CD8-positive, alpha-beta T cell (primary cell): ENCODE measurements at regions of chr4 and their contacts with region 1.

Region 1: DNA sequence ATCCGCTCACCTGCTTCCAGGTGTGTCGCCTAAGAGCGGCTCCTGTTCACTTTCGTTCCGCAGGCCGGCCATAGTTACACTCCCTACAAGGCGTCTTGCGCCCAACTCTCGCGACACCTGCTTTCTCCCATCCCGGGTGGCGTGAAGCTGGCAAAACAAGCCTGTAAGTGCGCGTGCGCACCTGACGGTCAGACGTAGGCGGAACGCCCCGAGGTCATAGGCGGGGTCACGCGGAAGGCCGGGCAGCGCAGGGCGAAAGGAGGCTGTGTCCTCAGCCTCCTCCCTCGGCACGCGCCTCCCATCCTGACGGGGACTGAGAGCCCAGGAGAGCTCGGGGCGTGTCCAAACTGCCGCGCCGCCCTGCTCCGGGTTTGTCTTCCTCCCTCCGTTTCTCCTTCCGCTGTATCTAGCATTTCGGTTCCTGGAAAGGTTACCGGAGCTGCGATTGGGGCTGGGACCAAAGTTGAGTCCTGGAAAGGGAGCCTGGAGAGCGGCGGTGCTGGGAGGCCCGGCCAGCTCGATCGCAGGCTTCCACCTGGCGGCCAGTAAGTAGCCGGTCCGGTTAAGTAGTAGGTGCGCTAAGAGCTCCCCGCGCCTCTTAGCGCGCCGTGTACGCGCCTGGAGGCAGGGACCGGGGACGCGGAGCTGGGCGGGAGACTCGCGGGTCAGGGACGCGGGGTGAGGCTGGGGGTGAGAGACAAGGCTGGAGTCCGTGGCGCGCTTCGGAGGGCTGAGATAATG is at the starts of genes ABHD18 and MFSD8:
- DNase-seq: peak; percentile 96 to 100 (median 99)
- ATAC-seq: peak; percentile 85
- H3K4me3 ChIP-seq: peak within 1 kb of the TSS; percentile 92 to 98
- H3K4me3 Mint-ChIP-seq: peak within 1 kb of the TSS; percentile 94
- H3K27ac ChIP-seq: peak within 1 kb of the TSS; percentile 91 to 96
- H3K27ac Mint-ChIP-seq: peak within 1 kb of the TSS; percentile 96
- H3K4me1 ChIP-seq: peaks cover 27% of the 10 kb centered on the region
- H3K4me1 Mint-ChIP-seq: peaks cover 49% of the 10 kb centered on the region
- H3K27me3 ChIP-seq: no peaks in the 10 kb centered on the region
- H3K27me3 Mint-ChIP-seq: no peaks in the 10 kb centered on the region
- CTCF ChIP-seq: no peak
- total RNA-seq, gene ABHD18: 13.3 to 13.5 TPM
- total RNA-seq, gene MFSD8: 26.1 to 27.1 TPM

Region 2: GRCh38 chr4:127781300-127782023 is 183.8 kb before region 1 on chr4:
- CTCF ChIA-PET with region 1: no interaction called
- POLR2A ChIA-PET with region 1: no interaction called
- intact Hi-C with region 1: loop called in 1 of 2 experiments (anchors 2 kb)
- DNase-seq: peak in 1 of 9 experiments; percentile 13
- ATAC-seq: peak; percentile 17
- H3K4me3 ChIP-seq: peak overlapping the region; percentile 42 to 66
- H3K4me3 Mint-ChIP-seq: peak overlapping the region; percentile 92
- H3K27ac ChIP-seq: no peak overlapping the region
- H3K27ac Mint-ChIP-seq: no peak overlapping the region
- H3K4me1 ChIP-seq: peaks cover 14% of the 10 kb centered on the region
- H3K4me1 Mint-ChIP-seq: peaks cover 15% of the 10 kb centered on the region
- H3K27me3 ChIP-seq: peaks cover 17 to 25% of the 10 kb centered on the region in 2 experiments
- H3K27me3 Mint-ChIP-seq: peaks cover 64% of the 10 kb centered on the region
- CTCF ChIP-seq: no peak

Region 3: GRCh38 chr4:127880764-127881562 is 84.3 kb before region 1 on chr4 and contains the start of gene PLK4:
- CTCF ChIA-PET with region 1: interaction called, 4 read pairs
- POLR2A ChIA-PET with region 1: interaction called, 19 read pairs
- intact Hi-C with region 1: loop called (anchors 1 to 2 kb)
- DNase-seq: peak; percentile 87 to 97 (median 94)
- ATAC-seq: peak; percentile 92
- H3K4me3 ChIP-seq: peak within 1 kb of the TSS; percentile 75 to 84
- H3K4me3 Mint-ChIP-seq: peak within 1 kb of the TSS; percentile 98
- H3K27ac ChIP-seq: peak within 1 kb of the TSS; percentile 71 to 87
- H3K27ac Mint-ChIP-seq: peak within 1 kb of the TSS; percentile 97
- H3K4me1 ChIP-seq: peaks cover 19% of the 10 kb centered on the region
- H3K4me1 Mint-ChIP-seq: peaks cover 23% of the 10 kb centered on the region
- H3K27me3 ChIP-seq: no peaks in the 10 kb centered on the region
- H3K27me3 Mint-ChIP-seq: no peaks in the 10 kb centered on the region
- CTCF ChIP-seq: no peak
- total RNA-seq, gene PLK4: 4.5 to 5.9 TPM

Region 4: DNA sequence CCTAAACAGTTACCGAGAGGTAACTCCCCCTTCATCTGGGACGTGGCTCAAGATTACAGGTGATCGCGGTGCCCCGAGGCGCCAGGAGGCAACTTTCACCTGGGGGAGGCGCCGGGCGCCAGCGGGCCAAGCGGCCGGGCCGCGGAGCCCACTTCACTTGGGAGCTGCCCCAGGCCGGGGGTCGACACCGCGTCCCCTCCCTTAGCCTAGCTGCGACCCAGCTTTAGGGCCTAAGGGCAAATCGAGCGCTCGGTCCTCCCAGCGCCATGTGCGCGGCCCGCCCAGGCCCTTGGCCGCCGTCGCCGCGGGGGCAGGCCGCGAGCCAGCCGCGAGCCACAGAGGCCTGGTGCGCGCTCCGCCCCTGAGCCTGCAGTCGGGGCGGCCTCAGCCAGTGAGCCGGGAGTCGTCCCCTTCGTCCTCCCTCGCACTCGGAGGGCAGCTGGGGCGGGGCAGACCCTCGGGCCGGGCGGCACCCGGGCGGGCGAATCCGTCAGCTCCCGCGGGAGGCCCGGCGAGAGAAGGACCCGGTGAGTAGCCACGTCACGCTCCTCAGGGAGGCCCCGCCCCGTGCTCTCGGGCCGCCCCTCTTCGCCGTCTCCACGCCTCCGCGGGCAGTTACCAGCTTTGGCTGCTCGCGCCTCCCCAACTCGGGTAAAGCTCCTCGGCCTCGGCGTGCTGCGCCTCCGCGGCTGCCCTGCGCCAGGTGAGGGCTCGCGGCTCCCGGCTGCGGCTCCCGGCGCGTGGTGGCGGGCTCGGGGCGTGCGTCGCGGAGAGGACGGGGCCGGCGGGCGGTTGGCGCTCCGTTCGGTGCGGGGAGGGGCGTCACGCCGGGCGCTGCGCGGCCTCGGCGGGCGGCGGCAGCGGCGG is 95.7 kb after region 1 on chr4 and contains the start of gene LARP1B:
- CTCF ChIA-PET with region 1: interaction called, 11 read pairs
- POLR2A ChIA-PET with region 1: interaction called, 46 read pairs
- intact Hi-C with region 1: loop called (anchors 1 to 2 kb)
- DNase-seq: peak; percentile 87 to 95 (median 91)
- ATAC-seq: peak; percentile 90
- H3K4me3 ChIP-seq: peak within 1 kb of the TSS; percentile 55 to 73
- H3K4me3 Mint-ChIP-seq: peak within 1 kb of the TSS; percentile 84
- H3K27ac ChIP-seq: peak within 1 kb of the TSS; percentile 79 to 86
- H3K27ac Mint-ChIP-seq: peak within 1 kb of the TSS; percentile 92
- H3K4me1 ChIP-seq: peaks cover 5% of the 10 kb centered on the region
- H3K4me1 Mint-ChIP-seq: peaks cover 12% of the 10 kb centered on the region
- H3K27me3 ChIP-seq: no peaks in the 10 kb centered on the region
- H3K27me3 Mint-ChIP-seq: no peaks in the 10 kb centered on the region
- CTCF ChIP-seq: no peak
- total RNA-seq, gene LARP1B: 10.0 to 10.1 TPM

Region 5: DNA sequence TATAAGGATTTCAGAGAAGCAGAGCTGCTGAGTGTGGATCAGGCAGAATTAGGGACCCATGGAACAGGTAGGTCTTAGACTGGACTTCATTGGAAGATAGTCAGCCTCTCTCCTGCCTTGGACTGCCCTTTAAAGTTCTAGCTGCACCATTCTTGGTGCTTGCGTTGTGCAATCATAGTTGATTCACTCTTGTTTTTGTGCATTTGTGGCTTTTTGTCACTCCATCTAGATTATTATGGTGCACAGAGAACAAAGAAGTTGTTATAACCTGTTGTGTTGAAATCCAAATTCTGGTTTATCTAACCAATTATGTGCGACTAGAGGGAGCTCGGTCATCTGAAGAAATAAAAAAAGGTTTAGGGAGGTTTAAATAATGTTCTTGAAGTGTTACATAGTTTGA is 903.5 kb after region 1 on chr4:
- CTCF ChIA-PET with region 1: no interaction called
- POLR2A ChIA-PET with region 1: no interaction called
- intact Hi-C with region 1: loop called in 1 of 2 experiments (anchors 5 kb)
- DNase-seq: no peak
- ATAC-seq: no peak
- H3K4me3 ChIP-seq: no peak overlapping the region
- H3K4me3 Mint-ChIP-seq: no peak overlapping the region
- H3K27ac ChIP-seq: no peak overlapping the region
- H3K27ac Mint-ChIP-seq: no peak overlapping the region
- H3K4me1 ChIP-seq: no peaks in the 10 kb centered on the region
- H3K4me1 Mint-ChIP-seq: peaks cover 2% of the 10 kb centered on the region
- H3K27me3 ChIP-seq: no peaks in the 10 kb centered on the region
- H3K27me3 Mint-ChIP-seq: no peaks in the 10 kb centered on the region
- CTCF ChIP-seq: no peak

Region 6: DNA sequence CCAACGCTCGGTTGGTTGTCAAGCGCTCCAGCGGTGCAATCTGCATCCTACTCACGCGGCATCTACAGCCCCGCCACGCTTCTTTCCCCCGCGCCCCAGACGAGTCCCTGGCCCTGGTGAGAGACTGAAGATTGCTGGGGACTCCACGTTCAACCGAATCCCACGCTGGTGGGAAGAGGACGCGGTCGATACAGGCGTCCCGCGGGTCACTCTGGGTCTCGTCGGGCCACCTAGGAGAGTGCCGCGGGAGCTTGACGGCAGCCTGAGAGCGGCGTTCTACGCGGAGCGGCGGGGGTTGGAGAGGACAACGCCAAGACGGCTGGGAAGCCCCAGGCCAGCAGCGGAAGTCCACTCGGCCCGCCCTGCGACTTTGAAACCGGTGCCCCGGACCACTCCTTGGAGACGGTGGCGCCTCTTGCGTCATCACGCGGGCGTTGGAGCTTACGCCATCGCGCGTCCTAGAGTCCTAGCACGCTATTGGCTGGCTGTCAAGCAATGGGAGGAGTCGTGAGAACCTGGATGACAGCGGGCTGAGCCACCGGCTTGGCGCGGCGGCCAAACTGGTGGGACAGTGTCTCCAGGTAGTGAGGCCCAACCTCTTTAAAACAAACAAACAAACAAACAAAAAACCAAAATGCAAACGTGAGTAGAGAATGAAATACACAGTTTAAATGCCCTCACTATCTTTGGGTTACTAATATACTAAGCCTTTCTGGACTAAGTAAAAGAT is 1128.1 kb after region 1 on chr4 and contains the start of gene SCLT1:
- CTCF ChIA-PET with region 1: no interaction called
- POLR2A ChIA-PET with region 1: interaction called, 5 read pairs
- intact Hi-C with region 1: loop called (anchors 1 to 5 kb)
- DNase-seq: peak; percentile 88 to 99 (median 96)
- ATAC-seq: peak; percentile 92
- H3K4me3 ChIP-seq: peak within 1 kb of the TSS; percentile 87 to 94
- H3K4me3 Mint-ChIP-seq: peak within 1 kb of the TSS; percentile 24
- H3K27ac ChIP-seq: peak within 1 kb of the TSS; percentile 94 to 98
- H3K27ac Mint-ChIP-seq: no peak within 1 kb of the TSS
- H3K4me1 ChIP-seq: peaks cover 40% of the 10 kb centered on the region
- H3K4me1 Mint-ChIP-seq: peaks cover 49% of the 10 kb centered on the region
- H3K27me3 ChIP-seq: no peaks in the 10 kb centered on the region
- H3K27me3 Mint-ChIP-seq: no peaks in the 10 kb centered on the region
- CTCF ChIP-seq: no peak
- total RNA-seq, gene SCLT1: 19.8 to 21.7 TPM